K562 (cell line): ENCODE measurements at regions of chr3 and their contacts with region 1.

Region 1: DNA sequence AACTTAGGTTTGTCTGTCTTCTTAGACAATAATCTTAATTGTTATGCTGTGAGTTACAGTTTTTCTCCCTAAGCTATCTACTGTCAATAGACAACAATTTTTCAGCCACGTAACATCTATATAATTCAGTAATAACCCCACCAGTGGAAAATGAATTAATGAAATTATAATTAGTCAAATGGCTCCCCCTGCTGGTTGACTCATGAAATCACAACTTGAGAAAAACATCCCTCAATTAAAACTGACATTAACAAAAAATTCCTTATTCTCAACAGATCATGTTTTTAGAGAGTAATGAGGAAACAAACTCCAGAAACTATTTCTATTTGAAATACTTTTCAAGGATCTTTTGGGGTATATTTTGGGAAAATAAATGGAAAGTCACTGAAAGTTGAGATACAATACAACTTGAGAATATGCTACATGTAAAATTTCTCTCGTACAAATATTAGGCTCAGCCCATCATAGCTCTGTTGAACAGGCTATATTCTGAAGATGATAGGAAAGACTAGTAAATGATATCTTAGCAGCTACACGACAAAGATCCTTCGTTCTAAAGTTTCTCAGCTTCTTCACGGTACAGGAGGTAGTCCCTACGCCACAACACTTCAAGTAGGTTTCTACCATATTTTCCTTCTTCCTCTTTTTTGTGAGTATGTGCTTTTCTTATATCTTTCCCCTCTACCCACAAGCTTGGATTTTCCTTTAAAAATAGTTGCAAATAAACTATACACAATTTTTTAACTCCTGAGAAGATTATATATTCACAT is 20.7 kb downstream of the PPP1R2 start:
- DNase-seq: peak; percentile 25 to 51 (median 42)
- ATAC-seq: no peak
- H3K4me3 ChIP-seq: no peak overlapping the region
- H3K27ac ChIP-seq: no peak overlapping the region
- H3K4me1 ChIP-seq: peaks cover 4 to 5% of the 10 kb centered on the region in 2 experiments; a peak in 1 of 5 replicates
- H3K27me3 ChIP-seq: no peaks in the 10 kb centered on the region
- CTCF ChIP-seq: peak; percentile 38 to 78 (median 48); a peak in 3 of 6 replicates
- EP300 ChIP-seq: no peak
- POLR2A ChIP-seq: no peak
- RAD21 ChIP-seq: peak; percentile 90 to 92

Region 2: GRCh38 chr3:195442573-195443390 is 79.7 kb before region 1 on chr3 and contains the start of gene ACAP2:
- CTCF ChIA-PET with region 1: no interaction called
- POLR2A ChIA-PET with region 1: no interaction called
- in situ Hi-C with region 1: no loop called
- intact Hi-C with region 1: loop called (anchors 10 kb)
- DNase-seq: peak; percentile 99 to 100 (median 100)
- ATAC-seq: peak; percentile 94
- H3K4me3 ChIP-seq: peak within 1 kb of the TSS; percentile 87
- H3K27ac ChIP-seq: peak within 1 kb of the TSS; percentile 89
- H3K4me1 ChIP-seq: peaks cover 16 to 21% of the 10 kb centered on the region in 2 experiments
- H3K27me3 ChIP-seq: no peaks in the 10 kb centered on the region
- CTCF ChIP-seq: no peak
- EP300 ChIP-seq: no peak
- POLR2A ChIP-seq: peak; percentile 84
- RAD21 ChIP-seq: no peak; a peak in 1 of 4 replicates
- polyA plus RNA-seq, gene ACAP2: 10.6 to 12.3 TPM

Region 3: GRCh38 chr3:195542698-195543499 is 20.5 kb after region 1 on chr3 and contains the start of gene PPP1R2:
- CTCF ChIA-PET with region 1: no interaction called
- POLR2A ChIA-PET with region 1: interaction called, 22 read pairs
- in situ Hi-C with region 1: no loop called
- intact Hi-C with region 1: no loop called
- DNase-seq: peak; percentile 94 to 99 (median 97)
- ATAC-seq: peak; percentile 93
- H3K4me3 ChIP-seq: peak within 1 kb of the TSS; percentile 62
- H3K27ac ChIP-seq: peak within 1 kb of the TSS; percentile 86
- H3K4me1 ChIP-seq: peaks cover 17 to 30% of the 10 kb centered on the region in 2 experiments
- H3K27me3 ChIP-seq: no peaks in the 10 kb centered on the region
- CTCF ChIP-seq: no peak
- EP300 ChIP-seq: no peak
- POLR2A ChIP-seq: peak; percentile 95
- RAD21 ChIP-seq: no peak
- polyA plus RNA-seq, gene PPP1R2: 9.4 to 10.5 TPM

Region 4: GRCh38 chr3:195847061-195847950 is 324.9 kb after region 1 on chr3:
- CTCF ChIA-PET with region 1: no interaction called
- POLR2A ChIA-PET with region 1: no interaction called
- in situ Hi-C with region 1: no loop called
- intact Hi-C with region 1: no loop called
- DNase-seq: no peak
- ATAC-seq: no peak
- H3K4me3 ChIP-seq: no peak overlapping the region
- H3K27ac ChIP-seq: no peak overlapping the region
- H3K4me1 ChIP-seq: peaks cover 6 to 26% of the 10 kb centered on the region in 2 experiments; a peak in 4 of 5 replicates
- H3K27me3 ChIP-seq: no peaks in the 10 kb centered on the region
- CTCF ChIP-seq: no peak
- EP300 ChIP-seq: no peak
- POLR2A ChIP-seq: no peak
- RAD21 ChIP-seq: no peak